ENCODE measurements at regions of chr5 and their contacts with region 1.

Region 1: GRCh38 chr5:172714491-172715421 is 56.2 kb downstream of the DUSP1 start:
- DNase-seq: peak; percentile 89
- ATAC-seq: peak; percentile 74

Region 2: GRCh38 chr5:172748341-172748843 is 33.6 kb after region 1 on chr5:
- intact Hi-C with region 1: loop called (anchors 2 kb)
- DNase-seq: peak; percentile 92
- ATAC-seq: peak; percentile 82

Region 3: DNA sequence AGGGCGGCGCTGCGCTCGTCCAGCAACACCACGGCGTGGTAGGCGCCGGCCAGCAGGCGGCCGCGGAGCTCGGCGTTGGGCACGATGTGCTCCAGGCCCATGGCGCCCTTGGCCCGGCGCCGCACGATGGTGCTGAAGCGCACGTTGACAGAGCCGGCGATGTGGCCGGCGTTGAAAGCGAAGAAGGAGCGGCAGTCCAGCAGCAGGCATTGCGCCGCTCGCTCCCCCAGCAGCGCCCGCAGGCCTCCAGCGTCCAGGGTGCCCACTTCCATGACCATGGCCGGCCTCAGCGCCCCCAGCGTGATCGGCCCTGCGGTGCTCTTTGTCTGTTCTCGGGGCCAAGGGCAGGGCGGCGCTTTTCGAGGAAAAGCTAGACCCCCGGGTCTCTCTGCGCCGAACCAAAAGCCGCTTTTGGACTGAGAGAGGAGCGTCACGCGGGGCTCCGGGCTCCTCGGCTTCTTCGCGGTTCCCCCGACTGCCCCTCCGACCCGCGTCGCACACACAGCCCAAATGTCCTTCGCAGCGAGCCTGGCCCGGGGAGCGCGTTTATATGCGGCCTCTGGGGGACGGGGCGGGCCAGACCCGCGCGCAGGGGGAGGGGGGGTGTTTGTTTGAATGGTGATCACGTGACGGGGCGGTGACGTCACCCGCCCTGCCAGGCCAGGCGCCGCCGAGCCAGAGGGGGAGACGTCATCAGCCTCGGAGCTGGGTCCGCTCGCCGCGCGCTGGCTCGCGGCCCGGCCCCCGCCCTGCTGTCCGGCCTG is 56.1 kb after region 1 on chr5 and contains the start of gene DUSP1:
- intact Hi-C with region 1: loop called (anchors 1 kb)
- DNase-seq: peak; percentile 100
- ATAC-seq: peak; percentile 73
- total RNA-seq, gene DUSP1: 103 TPM

Region 4: DNA sequence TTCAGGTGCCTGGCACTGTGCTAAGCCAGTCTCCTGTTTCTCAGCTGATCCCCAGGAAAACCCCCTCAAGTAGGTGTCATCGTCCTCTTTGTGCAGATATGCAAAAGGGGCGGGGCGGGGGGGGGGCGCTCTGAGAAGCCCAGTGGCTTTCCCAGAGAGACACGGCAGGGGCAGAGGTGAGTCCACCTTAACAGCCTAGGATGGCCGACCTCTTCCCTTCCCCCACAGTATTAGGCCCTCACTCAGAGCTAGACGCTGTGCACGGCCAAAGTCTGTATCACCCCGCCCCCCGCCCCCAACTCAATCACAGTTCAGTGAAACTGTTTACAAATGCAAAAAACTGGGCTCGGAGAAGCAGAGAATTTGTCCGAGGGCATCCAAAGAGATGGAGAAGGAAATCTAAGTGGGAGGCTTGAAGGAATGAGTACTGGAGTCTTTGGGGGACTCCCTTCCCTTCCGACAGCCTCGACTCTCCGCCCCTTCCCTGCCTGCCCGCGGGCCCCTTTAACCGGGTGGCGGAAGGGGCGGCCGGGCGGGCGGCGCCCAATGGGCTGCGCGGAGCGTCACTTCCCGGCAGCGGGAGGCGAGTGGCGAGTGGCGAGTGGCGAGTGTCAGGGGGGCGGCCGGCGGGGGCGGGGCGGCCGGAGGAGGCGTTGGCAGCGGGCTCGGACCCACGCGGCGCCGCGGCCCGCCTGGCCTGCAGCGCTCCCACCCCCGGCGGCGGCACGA is 119.1 kb after region 1 on chr5 and contains the start of gene ERGIC1:
- intact Hi-C with region 1: loop called (anchors 10 kb)
- DNase-seq: peak; percentile 95
- ATAC-seq: peak; percentile 94
- total RNA-seq, gene ERGIC1: 74.8 TPM

Region 5: GRCh38 chr5:172902497-172903200 is 187.9 kb after region 1 on chr5:
- intact Hi-C with region 1: loop called (anchors 1 kb)
- DNase-seq: peak; percentile 85
- ATAC-seq: peak; percentile 73

Region 6: GRCh38 chr5:172932313-172933017 is 217.7 kb after region 1 on chr5:
- intact Hi-C with region 1: loop called (anchors 1 kb)
- DNase-seq: peak; percentile 94
- ATAC-seq: peak; percentile 86

Region 7: DNA sequence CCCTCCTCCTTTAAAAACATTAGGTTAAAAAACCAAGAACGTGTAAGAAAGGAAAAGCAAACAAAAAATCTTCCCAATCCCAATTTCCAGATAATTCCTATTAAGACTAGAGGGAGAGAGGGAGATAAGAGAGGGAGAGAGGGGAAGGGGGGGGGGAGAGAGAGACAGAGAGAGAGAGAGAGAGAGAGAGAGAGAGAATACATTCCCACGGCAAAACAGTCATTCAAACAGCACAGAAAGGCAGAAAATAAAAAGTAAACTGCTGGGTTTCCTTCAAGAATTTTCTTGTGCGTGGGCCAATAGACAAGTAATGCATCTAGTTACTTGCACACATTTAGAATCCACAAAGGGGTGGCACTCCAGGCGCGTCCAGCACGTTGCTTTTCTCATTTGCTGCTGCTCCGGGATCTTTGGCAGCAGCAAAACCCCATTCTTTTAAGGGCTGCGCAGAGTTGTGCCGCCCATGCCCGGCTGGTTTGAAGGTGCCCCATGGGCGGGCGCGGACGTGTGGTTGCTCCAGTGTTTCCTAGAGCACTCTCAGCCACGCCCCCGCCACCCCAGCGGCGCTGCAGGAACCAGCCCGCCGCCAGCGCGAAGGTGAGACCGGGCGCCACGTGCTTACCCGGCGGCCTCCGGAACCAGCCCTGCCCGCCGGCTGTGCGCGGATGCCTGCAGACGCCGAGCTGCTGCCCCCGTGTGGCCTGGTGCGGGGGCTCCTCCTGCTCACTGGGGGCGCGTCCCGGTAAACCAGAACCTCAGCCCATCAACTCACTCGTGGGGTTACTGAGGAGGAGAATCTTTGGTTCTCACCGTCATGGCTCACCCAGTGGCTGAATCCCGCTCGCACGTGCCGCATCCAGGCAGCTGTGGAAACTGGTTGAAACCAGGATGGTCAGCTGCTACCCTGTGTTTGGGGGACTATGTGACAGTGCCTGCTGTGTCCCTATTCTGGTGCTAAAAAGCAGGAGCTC is 568.8 kb after region 1 on chr5:
- intact Hi-C with region 1: loop called (anchors 10 kb)
- DNase-seq: peak; percentile 88
- ATAC-seq: peak; percentile 91